A673 (cell line): ENCODE measurements at regions of chr2 and their contacts with region 1.

Region 1: DNA sequence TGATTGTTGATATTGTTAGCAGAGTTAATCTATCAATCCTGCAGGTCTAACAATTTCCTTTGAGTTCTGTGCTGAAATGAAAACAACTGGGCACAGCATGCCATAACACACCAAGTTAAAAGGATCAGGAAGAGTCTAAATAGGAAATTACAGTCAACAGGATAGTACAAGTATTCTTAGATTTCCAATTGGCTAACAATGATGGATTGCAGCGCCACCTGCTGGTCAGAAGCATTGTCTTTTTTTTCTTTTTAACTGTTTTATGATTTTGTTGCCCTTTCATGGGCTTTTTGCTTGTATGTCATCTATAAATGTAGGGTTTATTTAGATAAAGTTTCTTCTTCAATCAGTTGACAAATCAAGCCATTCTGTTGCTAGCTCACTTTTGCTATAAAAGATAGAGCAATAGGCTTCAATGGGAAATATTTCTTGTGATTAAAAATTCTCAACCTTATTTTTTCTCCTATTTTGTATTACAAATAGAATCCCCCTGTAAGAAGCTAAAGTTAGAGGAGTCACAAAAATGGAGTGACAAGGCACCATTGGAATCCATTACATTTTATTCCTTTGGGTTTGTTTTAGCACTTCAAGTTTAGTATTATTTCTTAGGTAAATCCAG is 40.8 kb upstream of the RPRM start:
- DNase-seq: peak; percentile 71
- H3K4me3 ChIP-seq: no peak overlapping the region
- H3K27ac ChIP-seq: no peak overlapping the region
- H3K4me1 ChIP-seq: no peaks in the 10 kb centered on the region
- H3K27me3 ChIP-seq: peaks cover 19% of the 10 kb centered on the region
- CTCF ChIP-seq: peak; percentile 86

Region 2: GRCh38 chr2:152036611-152037469 is 1482.5 kb before region 1 on chr2:
- CTCF ChIA-PET with region 1: no interaction called
- POLR2A ChIA-PET with region 1: no interaction called
- intact Hi-C with region 1: loop called (anchors 10 kb)
- DNase-seq: peak; percentile 80
- H3K4me3 ChIP-seq: no peak overlapping the region
- H3K27ac ChIP-seq: no peak overlapping the region
- H3K4me1 ChIP-seq: no peaks in the 10 kb centered on the region
- H3K27me3 ChIP-seq: no peaks in the 10 kb centered on the region
- CTCF ChIP-seq: peak; percentile 84

Region 3: GRCh38 chr2:152740743-152741328 is 778.5 kb before region 1 on chr2:
- CTCF ChIA-PET with region 1: no interaction called
- POLR2A ChIA-PET with region 1: no interaction called
- intact Hi-C with region 1: loop called (anchors 5 kb)
- DNase-seq: peak; percentile 78
- H3K4me3 ChIP-seq: no peak overlapping the region
- H3K27ac ChIP-seq: no peak overlapping the region
- H3K4me1 ChIP-seq: no peaks in the 10 kb centered on the region
- H3K27me3 ChIP-seq: no peaks in the 10 kb centered on the region
- CTCF ChIP-seq: peak; percentile 84

Region 4: GRCh38 chr2:152925547-152926327 is 593.6 kb before region 1 on chr2:
- CTCF ChIA-PET with region 1: no interaction called
- POLR2A ChIA-PET with region 1: no interaction called
- intact Hi-C with region 1: loop called (anchors 2 kb)
- DNase-seq: peak; percentile 87
- H3K4me3 ChIP-seq: no peak overlapping the region
- H3K27ac ChIP-seq: no peak overlapping the region
- H3K4me1 ChIP-seq: no peaks in the 10 kb centered on the region
- H3K27me3 ChIP-seq: peaks cover 11% of the 10 kb centered on the region
- CTCF ChIP-seq: peak; percentile 94

Region 5: DNA sequence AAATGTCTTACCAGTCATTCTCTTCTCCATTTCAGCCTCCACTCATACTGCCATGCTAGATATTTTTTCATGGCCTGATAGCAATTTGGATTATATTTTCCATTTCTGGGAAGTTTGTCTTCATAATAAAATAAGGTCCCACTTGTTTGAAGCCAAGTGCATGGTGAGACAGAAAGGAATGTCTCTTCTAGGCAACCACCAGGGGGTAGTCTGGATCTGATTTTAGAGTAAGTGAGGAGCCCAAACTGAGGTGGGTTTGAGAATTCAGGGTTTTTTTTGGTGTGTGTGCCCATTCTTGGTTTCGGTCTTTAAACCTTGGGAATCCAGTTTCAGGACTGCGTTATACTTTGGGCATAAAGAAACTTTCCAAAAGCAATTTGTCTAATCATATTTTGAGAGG is 356.3 kb before region 1 on chr2:
- CTCF ChIA-PET with region 1: interaction called, 17 read pairs
- POLR2A ChIA-PET with region 1: no interaction called
- intact Hi-C with region 1: loop called (anchors 2 kb)
- DNase-seq: peak; percentile 51
- H3K4me3 ChIP-seq: no peak overlapping the region
- H3K27ac ChIP-seq: no peak overlapping the region
- H3K4me1 ChIP-seq: no peaks in the 10 kb centered on the region
- H3K27me3 ChIP-seq: no peaks in the 10 kb centered on the region
- CTCF ChIP-seq: peak; percentile 61